ENCODE measurements at regions of chr12 and their contacts with region 1.

Region 1: GRCh38 chr12:111313833-111314259 is 55.0 kb downstream of the PHETA1 start:
- DNase-seq: peak; percentile 78
- ATAC-seq: peak; percentile 76 to 84
- H3K4me3 ChIP-seq: no peak overlapping the region
- H3K27ac ChIP-seq: no peak overlapping the region
- H3K4me1 ChIP-seq: no peaks in the 10 kb centered on the region
- H3K27me3 ChIP-seq: no peaks in the 10 kb centered on the region
- CTCF ChIP-seq: peak; percentile 94

Region 2: GRCh38 chr12:110937104-110937641 is 376.7 kb before region 1 on chr12:
- intact Hi-C with region 1: loop called (anchors 10 kb)
- DNase-seq: peak; percentile 75
- ATAC-seq: peak; percentile 66 to 84
- H3K4me3 ChIP-seq: no peak overlapping the region
- H3K27ac ChIP-seq: no peak overlapping the region
- H3K4me1 ChIP-seq: peaks cover 5% of the 10 kb centered on the region
- H3K27me3 ChIP-seq: peaks cover 20% of the 10 kb centered on the region
- CTCF ChIP-seq: peak; percentile 95

Region 3: DNA sequence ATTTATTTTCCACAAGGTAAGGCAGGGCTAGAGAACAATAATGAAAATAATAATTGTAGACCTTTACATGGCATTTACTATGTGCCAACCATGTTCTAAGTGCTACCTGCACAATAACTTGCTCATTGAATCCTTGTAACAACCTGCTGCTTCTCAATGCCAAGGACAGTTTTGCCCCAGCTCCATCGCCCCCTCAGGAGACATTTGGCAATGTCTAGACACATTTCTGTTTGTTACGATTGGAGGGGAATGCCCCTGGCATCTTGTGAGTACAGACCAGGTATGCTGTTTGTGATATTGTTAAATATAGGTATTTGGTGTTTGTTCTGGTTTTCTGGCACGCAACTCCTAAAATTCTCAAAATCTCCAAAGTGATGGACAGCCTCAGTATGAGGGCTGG is 293.4 kb after region 1 on chr12:
- intact Hi-C with region 1: no loop called
- DNase-seq: no peak
- ATAC-seq: no peak
- H3K4me3 ChIP-seq: no peak overlapping the region
- H3K27ac ChIP-seq: no peak overlapping the region
- H3K4me1 ChIP-seq: no peaks in the 10 kb centered on the region
- H3K27me3 ChIP-seq: no peaks in the 10 kb centered on the region
- CTCF ChIP-seq: no peak